ENCODE measurements at regions of chr7 and their contacts with region 1.

Region 1: DNA sequence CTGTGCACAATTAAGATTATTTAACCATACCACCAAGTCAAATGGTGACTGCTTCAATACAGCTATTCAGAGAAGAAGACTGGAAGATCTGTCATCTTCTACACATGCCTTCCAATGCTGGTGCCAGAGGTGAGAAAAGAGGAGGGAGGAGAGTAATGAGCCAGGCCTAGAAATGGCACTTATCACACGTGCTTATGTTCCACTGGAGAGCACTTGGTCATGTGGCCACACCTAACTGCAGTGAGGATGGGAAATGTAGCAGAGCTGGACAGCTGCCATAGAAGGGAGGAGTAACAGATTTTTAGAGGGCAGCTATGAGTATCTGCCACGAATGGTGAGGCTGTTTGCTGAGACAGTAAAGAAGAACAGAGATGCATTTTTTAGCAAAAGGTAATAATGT is 77.1 kb downstream of the MPLKIP start:
- DNase-seq: no peak
- H3K4me3 ChIP-seq: no peak overlapping the region
- H3K27ac ChIP-seq: no peak overlapping the region
- H3K4me1 ChIP-seq: peaks cover 0 to 3% of the 10 kb centered on the region in 2 experiments; a peak in 1 of 4 replicates
- H3K27me3 ChIP-seq: no peaks in the 10 kb centered on the region
- CTCF ChIP-seq: no peak
- EP300 ChIP-seq: no peak
- RAD21 ChIP-seq: no peak

Region 2: GRCh38 chr7:39845006-39845405 is 212.3 kb before region 1 on chr7:
- CTCF ChIA-PET with region 1: no interaction called
- POLR2A ChIA-PET with region 1: no interaction called
- DNase-seq: no peak
- H3K4me3 ChIP-seq: no peak overlapping the region
- H3K27ac ChIP-seq: no peak overlapping the region
- H3K4me1 ChIP-seq: no peaks in the 10 kb centered on the region
- H3K27me3 ChIP-seq: peaks cover 7% of the 10 kb centered on the region; the same call in 1 of the 2 replicates
- CTCF ChIP-seq: no peak
- EP300 ChIP-seq: no peak
- RAD21 ChIP-seq: no peak

Region 3: GRCh38 chr7:39948956-39949928 is 108.0 kb before region 1 on chr7:
- CTCF ChIA-PET with region 1: interaction called, 100 read pairs
- POLR2A ChIA-PET with region 1: no interaction called
- DNase-seq: peak; percentile 97
- H3K4me3 ChIP-seq: peak overlapping the region; percentile 96 to 97
- H3K27ac ChIP-seq: peak overlapping the region; percentile 97
- H3K4me1 ChIP-seq: peaks cover 0 to 20% of the 10 kb centered on the region in 2 experiments; a peak in 2 of 4 replicates
- H3K27me3 ChIP-seq: no peaks in the 10 kb centered on the region
- CTCF ChIP-seq: no peak
- EP300 ChIP-seq: no peak
- RAD21 ChIP-seq: peak; percentile 18; the same call in 1 of the 2 replicates

Region 4: DNA sequence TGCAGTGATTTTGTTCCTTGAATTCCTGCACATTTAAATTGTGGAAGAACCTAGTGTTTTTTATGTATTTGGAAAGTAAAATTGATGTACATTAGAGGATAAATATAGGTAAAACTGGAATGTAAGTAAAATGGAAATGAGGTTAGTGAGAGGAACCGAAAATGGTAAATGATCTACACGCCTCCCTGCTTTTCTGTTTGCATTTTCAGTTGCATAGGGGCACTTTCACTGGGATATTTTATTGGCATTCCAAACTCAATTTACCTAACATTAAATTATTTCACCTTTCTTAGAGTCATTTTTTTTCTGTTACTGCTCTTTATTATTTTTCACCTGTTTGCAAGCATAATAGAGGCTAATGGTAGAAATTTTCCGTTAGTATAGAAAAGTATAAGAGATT is 99.3 kb before region 1 on chr7:
- CTCF ChIA-PET with region 1: interaction called, 100 read pairs
- POLR2A ChIA-PET with region 1: no interaction called
- DNase-seq: no peak
- H3K4me3 ChIP-seq: no peak overlapping the region
- H3K27ac ChIP-seq: no peak overlapping the region
- H3K4me1 ChIP-seq: peaks cover 0 to 14% of the 10 kb centered on the region in 2 experiments; a peak in 3 of 4 replicates
- H3K27me3 ChIP-seq: no peaks in the 10 kb centered on the region
- CTCF ChIP-seq: no peak
- EP300 ChIP-seq: no peak
- RAD21 ChIP-seq: no peak

Region 5: DNA sequence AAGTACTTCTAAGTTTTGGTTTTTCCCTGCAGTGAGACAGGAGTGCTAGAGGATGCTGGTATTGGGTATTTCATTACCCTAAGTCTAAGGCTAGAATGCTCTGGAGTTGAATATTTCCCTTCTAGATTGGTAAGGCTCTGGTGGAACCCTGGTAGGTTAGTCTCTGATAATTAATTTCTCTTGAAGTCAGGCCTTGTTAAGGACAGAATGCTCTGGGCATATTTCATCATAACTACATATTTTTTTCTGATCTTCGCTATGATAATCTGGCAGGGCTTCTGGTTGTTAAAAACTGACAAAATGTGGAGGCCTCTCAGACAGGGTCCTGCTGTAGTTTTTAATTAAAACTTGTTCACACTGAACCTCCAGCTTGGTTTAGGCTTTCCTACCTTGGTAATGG is 23.5 kb before region 1 on chr7:
- CTCF ChIA-PET with region 1: interaction called, 27 read pairs
- POLR2A ChIA-PET with region 1: no interaction called
- DNase-seq: no peak
- H3K4me3 ChIP-seq: no peak overlapping the region
- H3K27ac ChIP-seq: no peak overlapping the region
- H3K4me1 ChIP-seq: peaks cover 0 to 6% of the 10 kb centered on the region in 2 experiments; a peak in 2 of 4 replicates
- H3K27me3 ChIP-seq: no peaks in the 10 kb centered on the region
- CTCF ChIP-seq: no peak
- EP300 ChIP-seq: no peak
- RAD21 ChIP-seq: no peak

Region 6: GRCh38 chr7:40043164-40043563 is 14.1 kb before region 1 on chr7:
- CTCF ChIA-PET with region 1: interaction called, 27 read pairs
- POLR2A ChIA-PET with region 1: no interaction called
- DNase-seq: no peak
- H3K4me3 ChIP-seq: no peak overlapping the region
- H3K27ac ChIP-seq: no peak overlapping the region
- H3K4me1 ChIP-seq: no peaks in the 10 kb centered on the region
- H3K27me3 ChIP-seq: no peaks in the 10 kb centered on the region
- CTCF ChIP-seq: no peak
- EP300 ChIP-seq: no peak
- RAD21 ChIP-seq: no peak

Region 7: GRCh38 chr7:40072268-40072667 is 15.0 kb after region 1 on chr7:
- CTCF ChIA-PET with region 1: interaction called, 13 read pairs
- POLR2A ChIA-PET with region 1: interaction called, 3 read pairs
- DNase-seq: no peak
- H3K4me3 ChIP-seq: no peak overlapping the region
- H3K27ac ChIP-seq: no peak overlapping the region
- H3K4me1 ChIP-seq: no peaks in the 10 kb centered on the region
- H3K27me3 ChIP-seq: no peaks in the 10 kb centered on the region
- CTCF ChIP-seq: no peak
- EP300 ChIP-seq: no peak
- RAD21 ChIP-seq: no peak

Measured in SK-N-SH (cell line).